ENCODE measurements at regions of chr17 and their contacts with region 1.

Region 1: DNA sequence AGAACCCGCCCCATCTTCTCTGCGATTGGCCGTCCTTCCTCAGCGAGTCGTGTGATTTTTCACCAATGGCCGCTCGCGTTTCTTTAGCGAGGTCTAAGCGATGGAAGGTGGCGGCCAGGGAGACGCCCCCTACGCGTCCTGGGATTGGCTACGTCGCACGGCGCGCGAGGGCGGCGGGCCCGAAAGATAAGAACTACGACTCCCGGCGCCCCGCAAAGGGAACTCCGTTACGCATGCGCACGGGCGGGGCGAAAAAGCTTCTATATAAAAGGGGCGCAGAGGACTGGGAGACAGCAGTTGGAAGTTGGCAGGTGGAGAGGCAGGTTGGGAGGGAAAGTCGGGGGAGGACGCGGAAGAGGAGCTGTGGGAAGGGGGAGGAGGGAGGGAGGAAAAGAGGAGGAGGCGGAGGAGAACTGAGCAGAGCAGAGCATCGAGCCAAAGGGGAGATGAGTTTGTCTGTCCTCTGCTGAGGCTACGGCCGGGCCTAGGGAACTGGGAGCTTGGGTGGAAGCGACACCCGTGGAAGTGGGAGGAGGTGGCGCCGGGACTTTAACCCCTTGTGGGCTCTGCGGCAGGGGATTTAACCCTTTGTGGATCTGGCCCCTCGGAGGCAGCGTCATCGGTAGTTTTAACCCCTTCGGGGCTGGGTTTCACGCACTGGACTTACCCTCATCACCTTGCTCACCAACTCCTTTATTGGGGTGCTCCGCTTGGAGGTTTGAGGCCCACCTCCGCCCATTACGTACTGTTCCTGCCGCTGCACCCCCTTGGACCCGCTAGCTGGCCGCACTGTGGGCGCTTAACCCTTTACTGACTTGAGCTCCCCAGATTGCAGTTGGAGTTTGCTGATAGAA is at the start of gene HEXIM1:
- DNase-seq: peak; percentile 99 to 100 (median 99)

Region 2: DNA sequence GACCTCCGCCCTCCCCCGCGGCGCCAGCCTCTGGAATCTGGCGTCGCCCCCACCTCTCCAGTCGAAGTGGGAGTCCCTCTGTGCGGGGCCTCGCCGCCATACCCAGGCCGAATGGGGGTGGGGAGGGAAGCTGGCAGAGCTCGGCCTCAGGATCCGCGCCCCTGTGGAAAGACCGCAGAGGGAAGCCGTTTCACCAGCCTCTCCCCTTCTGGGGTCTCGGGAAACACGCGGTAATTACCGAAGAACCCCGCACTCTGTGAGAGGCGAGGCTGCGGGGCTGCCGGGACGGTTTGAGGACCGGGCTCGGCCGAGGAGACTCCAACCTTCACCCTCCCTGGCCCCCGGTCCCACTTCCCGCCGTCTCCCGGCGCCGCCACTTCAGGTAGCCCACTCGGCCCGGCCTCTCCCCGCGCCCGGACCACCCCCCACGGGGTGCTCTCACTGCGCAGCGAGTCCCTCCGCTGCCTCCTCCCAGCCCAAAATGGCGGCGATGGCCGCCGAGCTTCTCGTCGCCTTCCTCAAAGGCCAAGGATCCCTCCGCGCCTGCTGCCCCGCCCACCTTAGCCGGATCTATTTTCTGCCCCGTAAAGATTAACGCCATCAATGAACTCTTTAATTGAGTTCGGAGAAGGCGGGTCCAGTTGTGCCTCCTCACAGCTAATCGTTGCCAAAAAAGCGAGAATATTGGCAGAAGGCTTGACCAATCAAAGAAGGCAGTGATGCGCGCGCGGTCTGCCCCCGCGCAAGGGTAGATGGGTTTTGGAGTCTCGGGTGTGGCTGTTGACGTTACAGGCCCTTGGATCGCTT is 12.8 kb after region 1 on chr17:
- intact Hi-C with region 1: loop called (anchors 1 kb)
- DNase-seq: peak; percentile 97 to 100 (median 98)

Region 3: DNA sequence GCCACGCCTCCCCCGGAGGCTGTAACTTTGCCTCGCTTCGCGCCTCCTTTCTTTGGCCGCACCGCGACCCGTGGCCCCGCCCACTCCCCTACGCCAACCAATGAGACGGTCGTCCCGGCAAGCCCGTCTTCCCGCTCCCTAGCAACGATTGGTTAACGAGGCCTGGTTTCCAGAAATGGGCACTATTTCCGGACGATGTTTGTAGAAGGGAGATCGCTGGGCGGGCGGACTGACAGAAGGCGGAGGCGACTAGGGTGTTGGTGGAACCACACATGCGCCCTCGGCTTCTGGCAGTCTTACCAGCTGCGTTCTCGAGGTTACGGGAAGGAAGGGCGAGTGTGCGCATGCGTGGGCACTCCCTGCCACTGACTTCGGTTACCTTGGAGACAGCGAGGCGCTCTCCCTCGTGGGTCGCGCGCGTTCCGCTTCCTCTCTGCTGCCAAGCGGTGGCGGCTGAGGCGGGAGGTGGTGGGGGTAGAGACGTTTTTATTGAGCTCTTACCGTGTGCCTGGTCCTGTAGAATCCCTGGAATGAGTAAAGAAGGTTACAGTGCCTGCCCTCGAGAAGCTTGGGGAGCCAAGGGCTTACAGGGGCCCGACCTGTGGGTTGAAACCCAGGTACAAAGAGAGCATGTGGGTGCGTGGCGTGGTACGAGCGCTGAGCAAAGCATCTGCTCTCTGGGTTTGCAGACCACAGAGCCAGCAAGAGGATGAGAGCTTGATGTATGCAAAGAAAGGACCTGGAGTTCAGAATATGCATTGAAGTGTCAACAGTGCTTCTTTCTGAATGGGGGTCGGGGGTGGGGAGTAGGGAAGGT is 168.9 kb after region 1 on chr17:
- intact Hi-C with region 1: loop called (anchors 5 kb)
- DNase-seq: peak; percentile 98 to 100 (median 99)

Region 4: DNA sequence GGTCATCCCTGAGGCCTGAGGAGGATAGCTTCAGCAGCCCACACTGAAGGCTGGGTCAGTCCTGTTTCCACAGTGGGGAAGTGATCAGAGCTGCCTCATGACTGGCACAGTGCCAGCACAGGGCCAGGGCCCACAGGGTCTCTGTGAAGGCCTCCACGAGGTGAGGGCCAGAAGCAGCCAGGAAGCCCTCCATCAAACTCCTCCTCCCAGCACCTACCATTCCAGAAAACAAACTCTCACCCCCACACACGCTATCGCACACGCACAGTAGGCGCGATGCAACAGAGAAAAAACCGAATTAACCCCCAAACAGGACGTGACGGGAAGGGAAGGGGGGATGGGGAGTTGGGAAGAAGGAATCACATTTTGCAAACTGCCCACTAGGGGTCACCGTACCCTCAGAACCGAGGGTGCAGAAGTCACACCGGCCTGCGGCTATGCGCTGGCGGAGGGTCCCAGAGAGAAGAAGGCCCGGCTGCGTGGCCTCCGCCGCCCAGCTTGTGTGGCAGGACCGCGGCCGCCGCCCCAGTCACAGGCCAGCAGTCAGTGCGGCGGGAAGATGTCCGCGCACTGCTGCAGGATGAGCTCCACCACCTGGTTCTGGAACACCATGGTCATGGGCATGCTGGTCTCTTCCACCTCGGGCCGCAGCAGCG is 246.6 kb after region 1 on chr17:
- intact Hi-C with region 1: no loop called
- DNase-seq: peak in 9 of 10 donors; percentile 34 to 92 (median 63)